ENCODE measurements at regions of chr9 and their contacts with region 1.

Region 1: DNA sequence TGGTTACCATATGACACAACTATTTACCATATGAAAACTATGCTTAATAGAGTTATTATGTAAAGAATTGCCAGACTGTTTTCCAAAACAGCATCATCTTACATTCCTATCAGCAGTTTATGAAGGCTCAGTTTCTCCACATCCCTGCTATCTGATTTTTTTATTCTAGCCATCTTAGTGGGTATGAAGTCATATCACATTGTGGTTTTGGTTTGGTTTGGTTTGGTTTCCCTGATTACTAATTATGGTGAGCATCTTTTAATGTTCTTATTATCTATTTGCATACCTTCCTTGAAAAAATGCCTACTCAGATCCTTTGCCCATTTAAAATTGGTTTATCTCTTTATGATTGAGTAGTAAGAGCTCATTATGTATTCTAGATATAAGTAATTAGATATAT is 199.4 kb upstream of the NFIL3 start:
- DNase-seq: no peak
- ATAC-seq: no peak
- H3K4me3 ChIP-seq: no peak overlapping the region
- H3K27ac ChIP-seq: no peak overlapping the region
- H3K4me1 ChIP-seq: no peaks in the 10 kb centered on the region
- H3K27me3 ChIP-seq: peaks cover 3% of the 10 kb centered on the region; the same call in 1 of the 2 replicates
- CTCF ChIP-seq: no peak
- POLR2A ChIP-seq: no peak
- RAD21 ChIP-seq: no peak

Region 2: GRCh38 chr9:91676046-91676445 is 53.0 kb after region 1 on chr9:
- CTCF ChIA-PET with region 1: no interaction called
- POLR2A ChIA-PET with region 1: no interaction called
- dilution Hi-C with region 1: no loop called
- in situ Hi-C with region 1: no loop called
- intact Hi-C with region 1: loop called (anchors 5 kb)
- DNase-seq: no peak
- ATAC-seq: no peak
- H3K4me3 ChIP-seq: no peak overlapping the region
- H3K27ac ChIP-seq: no peak overlapping the region
- H3K4me1 ChIP-seq: peaks cover 7% of the 10 kb centered on the region
- H3K27me3 ChIP-seq: no peaks in the 10 kb centered on the region
- CTCF ChIP-seq: 0 out of 2 replicates have a peak, but pooled peaks have one; percentile 9
- POLR2A ChIP-seq: no peak
- RAD21 ChIP-seq: no peak

Measured in IMR-90 (cell line).